ENCODE measurements at regions of chr5 and their contacts with region 1.

Region 1: GRCh38 chr5:91235271-91235694 is 147.8 kb downstream of the ARRDC3 start:
- DNase-seq: no peak
- ATAC-seq: no peak
- H3K4me3 Mint-ChIP-seq: no peak overlapping the region
- H3K27ac Mint-ChIP-seq: no peak overlapping the region
- H3K4me1 Mint-ChIP-seq: peaks cover 3% of the 10 kb centered on the region
- H3K27me3 Mint-ChIP-seq: peaks cover 2% of the 10 kb centered on the region

Region 2: GRCh38 chr5:91245871-91246270 is 10.6 kb after region 1 on chr5:
- CTCF ChIA-PET with region 1: no interaction called
- POLR2A ChIA-PET with region 1: no interaction called
- intact Hi-C with region 1: no loop called
- DNase-seq: no peak
- ATAC-seq: no peak
- H3K4me3 Mint-ChIP-seq: no peak overlapping the region
- H3K27ac Mint-ChIP-seq: no peak overlapping the region
- H3K4me1 Mint-ChIP-seq: no peaks in the 10 kb centered on the region
- H3K27me3 Mint-ChIP-seq: no peaks in the 10 kb centered on the region

Region 3: GRCh38 chr5:91257301-91257700 is 22.0 kb after region 1 on chr5:
- CTCF ChIA-PET with region 1: no interaction called
- POLR2A ChIA-PET with region 1: no interaction called
- intact Hi-C with region 1: loop called in 1 of 2 experiments (anchors 2 kb)
- DNase-seq: no peak
- ATAC-seq: no peak
- H3K4me3 Mint-ChIP-seq: no peak overlapping the region
- H3K27ac Mint-ChIP-seq: no peak overlapping the region
- H3K4me1 Mint-ChIP-seq: no peaks in the 10 kb centered on the region
- H3K27me3 Mint-ChIP-seq: peaks cover 5% of the 10 kb centered on the region